Naive thymus-derived CD4-positive, alpha-beta T cell (primary cell): ENCODE measurements at regions of chr1 and their contacts with region 1.

Region 1: GRCh38 chr1:114282751-114283403 is 129.2 kb upstream of the SYT6 start:
- DNase-seq: peak; percentile 65 to 84 (median 78)
- ATAC-seq: peak; percentile 99
- H3K4me3 ChIP-seq: no peak overlapping the region
- H3K4me3 Mint-ChIP-seq: no peak overlapping the region
- H3K27ac ChIP-seq: no peak overlapping the region
- H3K27ac Mint-ChIP-seq: no peak overlapping the region
- H3K4me1 ChIP-seq: no peaks in the 10 kb centered on the region
- H3K4me1 Mint-ChIP-seq: peaks cover 0 to 9% (median 0%) of the 10 kb centered on the region in 7 donors
- H3K27me3 ChIP-seq: no peaks in the 10 kb centered on the region
- H3K27me3 Mint-ChIP-seq: peaks cover 0 to 25% (median 0%) of the 10 kb centered on the region in 5 donors

Region 2: DNA sequence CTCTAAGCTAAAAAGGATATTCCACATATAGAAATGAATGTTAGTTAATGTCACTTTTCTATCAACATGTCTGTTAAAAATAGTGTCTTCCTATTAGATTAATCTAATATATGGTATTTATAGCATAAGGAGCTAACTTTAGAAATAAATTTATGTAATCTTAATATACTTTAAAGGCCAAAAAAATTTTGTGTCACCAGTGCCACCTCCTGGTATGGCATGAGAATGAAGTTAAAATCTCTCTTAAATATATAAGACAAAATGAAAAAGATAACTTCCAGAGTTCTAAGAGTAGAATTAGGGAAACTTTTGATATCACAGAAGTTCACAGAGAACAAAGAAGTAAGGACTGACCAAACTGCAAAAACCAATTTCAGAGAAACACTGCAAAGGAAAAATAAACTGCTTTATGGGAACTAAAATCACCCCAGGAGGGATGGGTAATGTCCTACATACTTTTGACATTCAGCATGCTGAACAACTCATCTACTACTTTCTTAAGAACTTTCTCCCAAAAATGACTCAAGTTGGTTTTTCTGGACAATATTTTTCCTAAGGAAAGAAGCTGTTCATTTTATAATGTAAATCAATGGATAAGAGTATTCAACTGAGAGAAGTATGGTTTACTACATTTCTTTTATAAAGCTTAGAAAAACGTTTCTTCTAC is 145.3 kb after region 1 on chr1:
- CTCF ChIA-PET with region 1: no interaction called
- POLR2A ChIA-PET with region 1: no interaction called
- intact Hi-C with region 1: loop called in 1 of 2 experiments (anchors 5 kb)
- DNase-seq: peak in 6 of 9 donors; percentile 8 to 26 (median 16)
- ATAC-seq: no peak
- H3K4me3 ChIP-seq: no peak overlapping the region
- H3K4me3 Mint-ChIP-seq: no peak overlapping the region
- H3K27ac ChIP-seq: no peak overlapping the region
- H3K27ac Mint-ChIP-seq: no peak overlapping the region
- H3K4me1 ChIP-seq: no peaks in the 10 kb centered on the region
- H3K4me1 Mint-ChIP-seq: peaks cover 0 to 6% (median 0%) of the 10 kb centered on the region in 7 donors
- H3K27me3 ChIP-seq: no peaks in the 10 kb centered on the region
- H3K27me3 Mint-ChIP-seq: no peaks in the 10 kb centered on the region

Region 3: DNA sequence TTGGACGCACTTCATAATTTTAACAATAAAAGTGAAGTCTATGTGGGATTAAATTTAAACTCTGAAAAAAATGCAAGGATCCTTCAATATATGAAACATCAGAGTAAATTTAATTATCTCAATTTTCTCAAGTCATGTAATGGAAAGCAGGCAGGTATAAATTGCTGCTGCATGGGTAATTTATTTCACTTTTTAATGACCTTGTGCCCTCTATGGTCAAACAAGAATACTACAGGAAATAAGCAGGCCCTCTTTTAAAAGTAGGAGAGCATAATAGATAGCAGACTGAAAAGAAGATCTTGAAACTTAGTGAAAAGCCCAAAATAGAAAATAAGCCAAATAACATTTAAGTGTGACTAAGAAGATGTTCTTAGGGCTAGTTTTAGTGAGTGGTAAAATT is 275.7 kb after region 1 on chr1:
- CTCF ChIA-PET with region 1: interaction called, 3 read pairs
- POLR2A ChIA-PET with region 1: no interaction called
- intact Hi-C with region 1: loop called in 1 of 2 experiments (anchors 1 kb)
- DNase-seq: peak in 4 of 9 donors; percentile 16 to 39 (median 25)
- ATAC-seq: no peak
- H3K4me3 ChIP-seq: no peak overlapping the region
- H3K4me3 Mint-ChIP-seq: no peak overlapping the region
- H3K27ac ChIP-seq: no peak overlapping the region
- H3K27ac Mint-ChIP-seq: no peak overlapping the region
- H3K4me1 ChIP-seq: no peaks in the 10 kb centered on the region
- H3K4me1 Mint-ChIP-seq: peaks cover 0 to 3% (median 0%) of the 10 kb centered on the region in 7 donors
- H3K27me3 ChIP-seq: no peaks in the 10 kb centered on the region
- H3K27me3 Mint-ChIP-seq: no peaks in the 10 kb centered on the region